PC-3 (cell line): ENCODE measurements at regions of chr10 and their contacts with region 1.

Region 1: GRCh38 chr10:133257489-133258065 is 19.1 kb downstream of the ADAM8 start:
- DNase-seq: peak; percentile 70
- ATAC-seq: peak; percentile 39
- H3K4me3 ChIP-seq: peak overlapping the region; percentile 27; the same call in 1 of the 2 replicates
- H3K27ac ChIP-seq: peak overlapping the region; percentile 97
- H3K4me1 ChIP-seq: peaks cover 51% of the 10 kb centered on the region
- H3K27me3 ChIP-seq: no peaks in the 10 kb centered on the region
- CTCF ChIP-seq: peak; percentile 72

Region 2: GRCh38 chr10:133100706-133101415 is 156.7 kb before region 1 on chr10:
- CTCF ChIA-PET with region 1: no interaction called
- POLR2A ChIA-PET with region 1: no interaction called
- intact Hi-C with region 1: no loop called
- DNase-seq: no peak
- ATAC-seq: no peak
- H3K4me3 ChIP-seq: no peak overlapping the region
- H3K27ac ChIP-seq: no peak overlapping the region
- H3K4me1 ChIP-seq: no peaks in the 10 kb centered on the region
- H3K27me3 ChIP-seq: peaks cover 30% of the 10 kb centered on the region
- CTCF ChIP-seq: no peak

Region 3: DNA sequence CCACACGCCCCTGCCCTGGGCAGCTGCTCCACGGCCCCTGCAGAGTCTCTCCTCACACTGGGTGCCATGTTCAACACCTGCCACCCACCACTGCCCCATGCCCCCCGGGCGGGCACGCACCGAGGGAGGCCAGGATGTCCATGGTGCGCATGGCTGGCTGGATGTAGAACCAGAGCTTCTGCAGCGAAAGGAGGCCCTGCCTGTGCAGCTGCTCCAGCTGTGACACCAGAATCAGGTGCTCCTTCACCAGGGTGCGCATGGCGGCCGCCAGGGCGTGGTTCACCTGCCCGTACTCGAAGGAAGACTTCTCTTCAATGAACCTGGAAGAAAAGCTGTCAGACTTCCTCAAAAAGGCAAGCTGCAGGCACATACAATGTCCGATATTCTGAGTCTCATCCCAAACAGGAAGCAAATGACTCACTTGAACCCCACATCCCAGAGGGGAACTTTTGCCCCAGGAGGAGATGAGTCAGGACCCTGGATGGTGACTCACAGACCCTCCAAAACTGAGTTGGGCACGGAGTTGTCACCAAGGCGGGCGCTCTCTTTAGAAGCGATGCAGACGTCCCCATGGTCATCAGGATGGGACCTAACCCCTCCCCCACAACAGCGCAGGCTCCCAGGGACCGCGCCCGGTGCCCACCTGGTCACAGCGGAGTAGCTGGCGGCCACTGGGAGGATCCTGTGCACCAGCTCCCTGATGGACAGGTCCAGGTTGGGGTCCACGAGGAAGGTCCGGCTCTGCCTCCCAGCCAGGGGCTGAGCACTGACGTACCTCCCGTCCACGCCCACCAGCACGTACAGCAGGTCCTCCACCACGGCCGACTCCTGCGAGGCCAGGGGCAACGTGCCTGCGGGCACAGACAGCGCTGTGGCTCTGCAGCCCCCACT is 35.6 kb after region 1 on chr10:
- CTCF ChIA-PET with region 1: interaction called, 4 read pairs
- POLR2A ChIA-PET with region 1: interaction called, 3 read pairs
- intact Hi-C with region 1: loop called (anchors 1 kb)
- DNase-seq: peak; percentile 93
- ATAC-seq: peak; percentile 84
- H3K4me3 ChIP-seq: peak overlapping the region; percentile 44; the same call in 1 of the 2 replicates
- H3K27ac ChIP-seq: peak overlapping the region; percentile 94
- H3K4me1 ChIP-seq: peaks cover 23% of the 10 kb centered on the region
- H3K27me3 ChIP-seq: no peaks in the 10 kb centered on the region
- CTCF ChIP-seq: no peak

Region 4: GRCh38 chr10:133309111-133309719 is 51.6 kb after region 1 on chr10:
- CTCF ChIA-PET with region 1: no interaction called
- POLR2A ChIA-PET with region 1: no interaction called
- intact Hi-C with region 1: loop called (anchors 5 kb)
- DNase-seq: peak; percentile 88
- ATAC-seq: peak; percentile 79
- H3K4me3 ChIP-seq: peak overlapping the region; percentile 98
- H3K27ac ChIP-seq: peak overlapping the region; percentile 85
- H3K4me1 ChIP-seq: peaks cover 17% of the 10 kb centered on the region
- H3K27me3 ChIP-seq: no peaks in the 10 kb centered on the region
- CTCF ChIP-seq: 0 out of 2 replicates have a peak, but pooled peaks have one; percentile 21